ENCODE measurements at regions of chr10 and their contacts with region 1.

Region 1: GRCh38 chr10:32445740-32446535 is at the start of gene CCDC7:
- DNase-seq: peak; percentile 96
- H3K4me3 Mint-ChIP-seq: peak within 1 kb of the TSS; percentile 96
- H3K27ac Mint-ChIP-seq: peak within 1 kb of the TSS; percentile 99
- H3K4me1 Mint-ChIP-seq: peaks cover 11% of the 10 kb centered on the region
- H3K27me3 Mint-ChIP-seq: peaks cover 4% of the 10 kb centered on the region
- total RNA-seq, gene CCDC7: 8.5 and 13.6 TPM in 2 replicates

Region 2: GRCh38 chr10:32256613-32257437 is 189.1 kb before region 1 on chr10:
- intact Hi-C with region 1: loop called (anchors 5 kb)
- DNase-seq: peak; percentile 90
- H3K4me3 Mint-ChIP-seq: no peak overlapping the region
- H3K27ac Mint-ChIP-seq: no peak overlapping the region
- H3K4me1 Mint-ChIP-seq: peaks cover 18% of the 10 kb centered on the region
- H3K27me3 Mint-ChIP-seq: no peaks in the 10 kb centered on the region

Region 3: GRCh38 chr10:32378363-32379317 is 67.3 kb before region 1 on chr10:
- intact Hi-C with region 1: loop called (anchors 1 kb)
- DNase-seq: peak; percentile 97
- H3K4me3 Mint-ChIP-seq: no peak overlapping the region
- H3K27ac Mint-ChIP-seq: no peak overlapping the region
- H3K4me1 Mint-ChIP-seq: peaks cover 18% of the 10 kb centered on the region
- H3K27me3 Mint-ChIP-seq: no peaks in the 10 kb centered on the region

Region 4: GRCh38 chr10:32459051-32459698 is 13.2 kb after region 1 on chr10:
- intact Hi-C with region 1: loop called (anchors 2 kb)
- DNase-seq: peak; percentile 90
- H3K4me3 Mint-ChIP-seq: peak overlapping the region; percentile 39
- H3K27ac Mint-ChIP-seq: no peak overlapping the region
- H3K4me1 Mint-ChIP-seq: peaks cover 20% of the 10 kb centered on the region
- H3K27me3 Mint-ChIP-seq: no peaks in the 10 kb centered on the region

Region 5: GRCh38 chr10:32901815-32902214 is 455.9 kb after region 1 on chr10:
- intact Hi-C with region 1: no loop called
- DNase-seq: no peak
- H3K4me3 Mint-ChIP-seq: no peak overlapping the region
- H3K27ac Mint-ChIP-seq: no peak overlapping the region
- H3K4me1 Mint-ChIP-seq: no peaks in the 10 kb centered on the region
- H3K27me3 Mint-ChIP-seq: no peaks in the 10 kb centered on the region

Region 6: GRCh38 chr10:33008499-33009243 is 562.7 kb after region 1 on chr10:
- intact Hi-C with region 1: loop called (anchors 5 kb)
- DNase-seq: peak; percentile 88
- H3K4me3 Mint-ChIP-seq: peak overlapping the region; percentile 79
- H3K27ac Mint-ChIP-seq: peak overlapping the region; percentile 45
- H3K4me1 Mint-ChIP-seq: peaks cover 19% of the 10 kb centered on the region
- H3K27me3 Mint-ChIP-seq: peaks cover 11% of the 10 kb centered on the region